Transverse colon (tissue), 4 donors: ENCODE measurements at regions of chr13 and their contacts with region 1.

Region 1: GRCh38 chr13:38349390-38350113 is at the start of gene UFM1:
- DNase-seq: peak; percentile 94
- H3K4me3 ChIP-seq: peak within 1 kb of the TSS; percentile 68 to 88 (median 78)
- H3K27ac ChIP-seq: peak within 1 kb of the TSS; percentile 89 to 92 (median 91)
- H3K4me1 ChIP-seq: peaks cover 0 to 25% (median 13%) of the 10 kb centered on the region in 4 donors
- H3K27me3 ChIP-seq: no peaks in the 10 kb centered on the region
- CTCF ChIP-seq: no peak
- EP300 ChIP-seq: no peak
- POLR2A ChIP-seq: peak; percentile 85
- total RNA-seq, gene UFM1: 18.3 to 61.6 (median 37.2) TPM

Region 2: GRCh38 chr13:37058910-37059847 is 1290.4 kb before region 1 on chr13 and contains the start of gene SUPT20H:
- in situ Hi-C with region 1: loop called in 1 of 4 experiments (anchors 25 kb)
- intact Hi-C with region 1: no loop called
- DNase-seq: peak; percentile 96
- H3K4me3 ChIP-seq: peak within 1 kb of the TSS; percentile 85 to 91 (median 88)
- H3K27ac ChIP-seq: peak within 1 kb of the TSS; percentile 91 to 96 (median 94)
- H3K4me1 ChIP-seq: peaks cover 11 to 21% (median 17%) of the 10 kb centered on the region in 4 donors
- H3K27me3 ChIP-seq: peaks cover 6% of the 10 kb centered on the region
- CTCF ChIP-seq: peak in 1 of 5 experiments; percentile 18
- EP300 ChIP-seq: no peak
- POLR2A ChIP-seq: peak; percentile 92
- total RNA-seq, gene SUPT20H: 28.4 to 67.6 (median 45.3) TPM

Region 3: DNA sequence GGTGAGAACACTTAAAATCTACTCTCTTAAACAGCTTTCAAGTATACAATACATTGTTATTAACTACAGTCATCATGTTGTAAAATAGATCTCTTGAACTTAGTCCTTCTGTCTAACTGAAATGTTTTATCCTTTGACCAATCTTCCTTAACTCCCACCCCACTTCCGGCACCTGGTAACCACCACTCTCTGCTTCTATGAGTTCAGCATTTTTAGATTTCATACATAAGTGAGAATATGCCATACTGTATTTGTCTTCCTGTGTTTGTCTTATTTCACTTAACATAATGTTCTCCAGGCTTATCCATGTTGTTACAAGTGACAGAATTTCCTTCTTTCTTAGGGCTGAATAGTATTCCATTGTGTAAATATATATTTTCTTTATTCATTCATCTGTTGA is 335.9 kb before region 1 on chr13:
- in situ Hi-C with region 1: no loop called
- intact Hi-C with region 1: no loop called
- DNase-seq: no peak
- H3K4me3 ChIP-seq: no peak overlapping the region
- H3K27ac ChIP-seq: no peak overlapping the region
- H3K4me1 ChIP-seq: no peaks in the 10 kb centered on the region
- H3K27me3 ChIP-seq: no peaks in the 10 kb centered on the region
- CTCF ChIP-seq: no peak
- EP300 ChIP-seq: no peak
- POLR2A ChIP-seq: no peak